Heart left ventricle (tissue), 16 donors: ENCODE measurements at regions of chr1 and their contacts with region 1.

Region 1: DNA sequence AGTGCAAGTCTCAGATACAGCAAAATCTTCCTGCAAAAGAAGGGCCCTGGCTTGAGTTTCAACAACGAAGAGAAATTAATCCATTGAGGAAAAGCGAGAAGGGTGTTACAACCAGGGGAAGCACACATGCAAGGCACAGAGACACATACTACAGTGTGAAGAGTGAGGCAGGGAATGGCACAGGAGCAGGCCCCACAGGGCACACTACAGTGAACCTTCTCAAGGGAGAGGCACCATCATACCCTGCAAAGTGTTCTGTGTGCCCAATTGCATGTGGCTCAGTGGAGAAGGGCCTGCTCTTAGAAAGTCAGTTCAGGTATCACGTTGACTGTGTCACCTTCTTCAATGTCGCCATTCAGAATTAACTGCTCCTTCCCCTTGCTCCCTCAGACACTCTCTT is 60.3 kb downstream of the LMX1A start:
- DNase-seq: no peak
- ATAC-seq: no peak
- H3K4me3 ChIP-seq: no peak overlapping the region
- H3K27ac ChIP-seq: no peak overlapping the region
- H3K4me1 ChIP-seq: no peaks in the 10 kb centered on the region
- H3K27me3 ChIP-seq: peaks cover 0 to 9% (median 0%) of the 10 kb centered on the region in 9 donors
- CTCF ChIP-seq: no peak
- POLR2A ChIP-seq: no peak

Region 2: GRCh38 chr1:165235777-165236291 is 60.4 kb before region 1 on chr1:
- intact Hi-C with region 1: no loop called
- DNase-seq: no peak
- ATAC-seq: no peak
- H3K4me3 ChIP-seq: peak overlapping the region; percentile 9 to 48 (median 38)
- H3K27ac ChIP-seq: no peak overlapping the region
- H3K4me1 ChIP-seq: peaks cover 0 to 14% (median 3%) of the 10 kb centered on the region in 12 donors
- H3K27me3 ChIP-seq: peaks cover 4 to 71% (median 26%) of the 10 kb centered on the region in 9 donors
- CTCF ChIP-seq: no peak
- POLR2A ChIP-seq: no peak

Region 3: DNA sequence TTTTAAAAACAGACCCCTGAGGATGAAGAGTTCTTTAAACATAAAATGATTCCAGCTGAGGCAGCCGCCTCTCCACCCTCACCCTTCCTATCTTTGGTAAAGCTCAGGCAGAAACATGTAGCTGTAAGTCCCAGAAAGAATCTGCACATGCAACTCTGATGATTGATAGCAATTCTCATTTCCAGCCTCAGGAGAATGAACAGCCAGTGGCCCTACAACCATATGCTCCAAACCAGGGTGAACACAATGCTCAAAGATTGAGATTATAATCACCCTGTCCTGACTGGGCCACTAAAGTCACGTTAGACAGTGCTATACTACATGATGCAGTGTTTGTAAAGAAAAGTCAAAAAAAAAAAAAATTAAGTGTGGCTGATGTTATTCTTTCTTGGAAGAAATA is 19.9 kb before region 1 on chr1:
- intact Hi-C with region 1: loop called in 1 of 10 experiments (anchors 1 kb)
- DNase-seq: no peak
- ATAC-seq: no peak
- H3K4me3 ChIP-seq: no peak overlapping the region
- H3K27ac ChIP-seq: no peak overlapping the region
- H3K4me1 ChIP-seq: no peaks in the 10 kb centered on the region
- H3K27me3 ChIP-seq: peaks cover 0 to 23% (median 9%) of the 10 kb centered on the region in 9 donors
- CTCF ChIP-seq: no peak
- POLR2A ChIP-seq: no peak

Region 4: DNA sequence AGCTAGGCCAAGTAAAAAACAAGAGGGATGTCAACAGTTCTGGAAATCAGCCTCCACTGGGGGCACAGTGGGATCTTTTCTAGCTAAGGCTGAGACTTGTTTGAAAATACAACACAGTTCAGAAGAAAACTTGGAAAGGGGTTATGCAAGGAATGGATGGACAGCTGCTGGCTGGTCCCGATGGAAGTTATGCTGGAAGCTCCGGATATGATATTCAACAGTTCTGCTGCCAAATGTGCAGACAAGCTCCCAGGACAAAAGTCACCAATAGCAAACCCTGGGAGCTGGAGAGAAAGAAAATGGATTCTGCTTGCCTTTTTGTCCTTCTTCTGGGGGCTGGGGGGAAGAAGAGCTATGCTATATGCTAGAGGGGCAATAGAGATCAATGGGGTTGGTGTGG is 46.0 kb after region 1 on chr1:
- intact Hi-C with region 1: no loop called
- DNase-seq: peak in 1 of 5 donors; percentile 37
- ATAC-seq: no peak
- H3K4me3 ChIP-seq: no peak overlapping the region
- H3K27ac ChIP-seq: no peak overlapping the region
- H3K4me1 ChIP-seq: no peaks in the 10 kb centered on the region
- H3K27me3 ChIP-seq: peaks cover 0 to 59% (median 19%) of the 10 kb centered on the region in 9 donors
- CTCF ChIP-seq: no peak
- POLR2A ChIP-seq: no peak